ENCODE measurements at regions of chr1 and their contacts with region 1.

Region 1: GRCh38 chr1:168504064-168504837 is 39.5 kb downstream of the XCL2 start:
- DNase-seq: peak; percentile 19
- CTCF ChIP-seq: no peak

Region 2: GRCh38 chr1:168483539-168483938 is 20.7 kb before region 1 on chr1:
- CTCF ChIA-PET with region 1: interaction called, 13 read pairs
- POLR2A ChIA-PET with region 1: no interaction called
- DNase-seq: no peak
- CTCF ChIP-seq: no peak